CD14-positive monocyte (primary cell): ENCODE measurements at regions of chr2 and their contacts with region 1.

Region 1: DNA sequence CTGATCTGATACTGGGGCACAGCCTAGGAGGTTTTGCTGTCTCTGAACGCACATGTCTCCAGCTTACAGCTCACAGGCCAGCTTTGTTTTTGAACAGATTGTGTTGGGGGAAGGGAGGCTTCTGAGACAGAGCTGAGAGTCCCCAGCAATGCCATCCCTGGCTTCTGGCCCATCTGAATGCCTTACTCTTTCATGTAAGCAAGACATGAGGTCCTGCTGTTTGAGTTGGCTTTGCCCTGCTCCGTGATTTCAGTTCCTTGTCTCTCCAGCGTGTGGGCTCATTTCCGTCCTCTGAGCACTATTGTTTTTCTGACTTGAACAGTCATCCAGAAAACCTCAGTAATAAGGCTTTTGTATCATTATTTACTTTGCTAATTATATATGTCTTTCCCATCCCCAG is 194.9 kb upstream of the TNP1 start:
- DNase-seq: no peak
- H3K4me3 ChIP-seq: no peak overlapping the region
- H3K4me3 Mint-ChIP-seq: no peak overlapping the region
- H3K27ac ChIP-seq: no peak overlapping the region
- H3K27ac Mint-ChIP-seq: no peak overlapping the region
- H3K4me1 ChIP-seq: no peaks in the 10 kb centered on the region
- H3K4me1 Mint-ChIP-seq: no peaks in the 10 kb centered on the region
- H3K27me3 ChIP-seq: peaks cover 7 to 9% of the 10 kb centered on the region in 2 donors
- H3K27me3 Mint-ChIP-seq: peaks cover 14 to 38% (median 19%) of the 10 kb centered on the region in 3 donors
- CTCF ChIP-seq: no peak

Region 2: DNA sequence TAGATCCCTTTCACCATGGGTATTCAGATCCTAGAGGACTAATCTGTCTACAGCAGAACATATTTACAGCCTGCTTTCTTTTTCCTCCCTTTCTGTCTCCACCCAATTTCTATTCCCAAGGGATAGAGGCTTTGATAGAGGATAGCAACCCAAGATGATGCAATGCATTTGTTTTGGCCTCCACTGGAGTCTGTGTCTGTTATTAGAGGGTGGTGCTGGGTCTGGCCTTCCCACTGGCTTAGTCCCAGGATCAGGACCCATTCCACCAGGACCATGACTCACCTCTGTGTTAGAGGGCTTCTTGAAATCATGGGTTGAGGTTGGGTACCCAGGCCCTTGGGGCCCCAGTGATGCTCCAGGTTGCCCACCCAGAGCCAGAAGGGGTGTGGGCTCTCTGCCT is 44.8 kb after region 1 on chr2:
- intact Hi-C with region 1: loop called in 1 of 2 experiments (anchors 5 kb)
- DNase-seq: no peak
- H3K4me3 ChIP-seq: no peak overlapping the region
- H3K4me3 Mint-ChIP-seq: no peak overlapping the region
- H3K27ac ChIP-seq: no peak overlapping the region
- H3K27ac Mint-ChIP-seq: no peak overlapping the region
- H3K4me1 ChIP-seq: no peaks in the 10 kb centered on the region
- H3K4me1 Mint-ChIP-seq: peaks cover 20% of the 10 kb centered on the region
- H3K27me3 ChIP-seq: no peaks in the 10 kb centered on the region
- H3K27me3 Mint-ChIP-seq: peaks cover 0 to 9% (median 7%) of the 10 kb centered on the region in 3 donors
- CTCF ChIP-seq: no peak